ENCODE measurements at regions of chr12 and their contacts with region 1.

Region 1: DNA sequence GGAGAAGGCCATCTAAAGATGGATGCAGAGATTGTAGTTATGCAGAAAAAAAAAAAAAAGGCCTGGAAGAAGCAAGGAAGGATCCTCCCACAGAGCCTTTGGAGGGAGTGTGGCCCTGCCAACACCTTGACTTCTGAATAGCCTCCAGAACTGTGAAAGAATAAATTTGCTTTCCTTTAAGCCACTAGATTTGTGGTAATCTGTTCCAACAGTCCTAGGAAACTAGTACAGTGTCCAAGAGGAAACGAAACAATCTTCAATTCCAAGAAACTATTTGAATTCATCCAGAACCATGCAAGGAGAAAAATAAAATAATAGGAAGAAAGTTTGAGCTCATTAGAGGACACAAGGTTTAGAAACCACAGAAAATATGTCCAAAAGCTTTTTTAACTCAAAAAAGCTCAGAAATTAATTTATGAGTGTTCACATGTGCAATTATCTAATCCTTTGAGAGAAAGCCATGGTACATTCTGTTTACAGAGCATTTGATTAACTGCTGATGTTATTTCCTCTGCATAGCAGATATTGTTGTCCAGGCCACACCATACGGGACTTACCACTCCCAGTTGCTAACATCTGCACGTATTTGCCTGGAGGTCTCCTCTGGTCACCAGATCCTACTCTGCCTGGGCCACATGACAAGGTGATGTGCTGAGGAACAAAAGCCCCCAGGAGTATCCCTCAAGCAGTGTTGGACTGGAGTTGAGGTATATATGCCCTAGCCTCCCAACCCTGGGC is 30.0 kb upstream of the STAB2 start:
- DNase-seq: no peak
- CTCF ChIP-seq: no peak

Region 2: GRCh38 chr12:102883204-102883799 is 673.8 kb before region 1 on chr12:
- in situ Hi-C with region 1: loop called (anchors 10 kb)
- DNase-seq: peak; percentile 69
- CTCF ChIP-seq: peak; percentile 93

Measured in GM13976 (cell line).